ENCODE measurements at regions of chr18 and their contacts with region 1.

Region 1: GRCh38 chr18:44679056-44679905 is 1.4 kb upstream of the SETBP1 start:
- DNase-seq: peak; percentile 81
- ATAC-seq: peak; percentile 97
- H3K4me3 ChIP-seq: peak overlapping the region; percentile 75
- H3K27ac ChIP-seq: peak overlapping the region; percentile 87
- H3K4me1 ChIP-seq: peaks cover 3% of the 10 kb centered on the region; the same call in 1 of the 2 replicates
- H3K27me3 ChIP-seq: peaks cover 21% of the 10 kb centered on the region
- CTCF ChIP-seq: peak; percentile 72
- POLR2A ChIP-seq: peak; percentile 29; the same call in 1 of the 2 replicates
- RAD21 ChIP-seq: peak; percentile 64

Region 2: GRCh38 chr18:43661570-43661969 is 1017.7 kb before region 1 on chr18:
- CTCF ChIA-PET with region 1: no interaction called
- POLR2A ChIA-PET with region 1: no interaction called
- dilution Hi-C with region 1: no loop called
- in situ Hi-C with region 1: no loop called
- intact Hi-C with region 1: loop called (anchors 1 kb)
- DNase-seq: peak; percentile 83
- ATAC-seq: 0 out of 2 replicates have a peak, but pooled peaks have one; percentile 13
- H3K4me3 ChIP-seq: no peak overlapping the region
- H3K27ac ChIP-seq: peak overlapping the region; percentile 45; the same call in 1 of the 2 replicates
- H3K4me1 ChIP-seq: peaks cover 6% of the 10 kb centered on the region
- H3K27me3 ChIP-seq: no peaks in the 10 kb centered on the region
- CTCF ChIP-seq: peak; percentile 59
- POLR2A ChIP-seq: no peak
- RAD21 ChIP-seq: peak; percentile 75

Region 3: GRCh38 chr18:44458777-44459176 is 220.5 kb before region 1 on chr18:
- CTCF ChIA-PET with region 1: no interaction called
- POLR2A ChIA-PET with region 1: no interaction called
- dilution Hi-C with region 1: no loop called
- in situ Hi-C with region 1: no loop called
- intact Hi-C with region 1: no loop called
- DNase-seq: peak; percentile 32
- ATAC-seq: no peak
- H3K4me3 ChIP-seq: no peak overlapping the region
- H3K27ac ChIP-seq: no peak overlapping the region
- H3K4me1 ChIP-seq: no peaks in the 10 kb centered on the region
- H3K27me3 ChIP-seq: no peaks in the 10 kb centered on the region
- CTCF ChIP-seq: no peak
- POLR2A ChIP-seq: no peak
- RAD21 ChIP-seq: no peak

Region 4: DNA sequence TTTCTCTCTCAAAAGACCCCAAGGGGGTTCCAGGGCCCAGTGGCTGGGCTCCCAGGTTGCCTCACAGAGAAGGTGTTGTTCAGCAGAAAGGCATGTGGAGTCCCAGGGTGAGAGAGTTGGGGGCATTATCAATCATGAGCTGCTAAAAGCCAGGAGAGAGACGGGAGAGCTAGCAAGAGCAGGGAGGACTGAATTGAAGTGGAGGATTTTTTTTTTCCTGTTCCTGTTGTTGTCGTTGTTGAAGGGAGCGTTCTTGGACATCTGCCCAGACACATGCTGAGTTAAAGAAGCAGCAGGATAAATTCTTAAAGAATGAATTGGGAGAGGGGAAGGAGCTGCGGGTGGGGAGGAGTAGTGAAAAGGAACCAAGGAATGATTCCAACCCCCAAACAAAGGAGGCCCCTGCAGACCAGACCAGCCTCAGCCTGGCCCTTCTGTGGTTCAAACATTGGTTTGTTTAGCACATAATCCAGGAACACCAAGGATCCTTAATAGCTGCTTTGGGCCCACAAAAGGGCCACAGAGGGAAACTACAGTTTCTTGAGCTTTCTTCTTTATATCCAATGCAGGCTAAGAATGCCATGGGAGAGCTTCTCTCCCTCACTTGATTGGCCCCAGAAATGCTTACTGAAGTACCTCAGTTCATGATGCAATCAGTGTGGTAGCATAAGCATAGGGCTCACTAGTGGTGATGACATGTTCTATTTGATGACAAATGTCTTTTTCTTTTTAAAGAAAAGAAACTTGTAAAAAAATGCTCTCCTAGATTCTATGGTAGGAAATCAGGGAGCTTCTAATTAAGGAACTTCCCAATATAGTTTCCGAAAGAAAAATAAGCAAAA is 147.4 kb after region 1 on chr18:
- CTCF ChIA-PET with region 1: no interaction called
- POLR2A ChIA-PET with region 1: no interaction called
- dilution Hi-C with region 1: no loop called
- in situ Hi-C with region 1: no loop called
- intact Hi-C with region 1: no loop called
- DNase-seq: peak; percentile 83
- ATAC-seq: peak; percentile 77
- H3K4me3 ChIP-seq: no peak overlapping the region
- H3K27ac ChIP-seq: peak overlapping the region; percentile 68; the same call in 1 of the 2 replicates
- H3K4me1 ChIP-seq: peaks cover 2% of the 10 kb centered on the region; the same call in 1 of the 2 replicates
- H3K27me3 ChIP-seq: no peaks in the 10 kb centered on the region
- CTCF ChIP-seq: no peak
- POLR2A ChIP-seq: no peak
- RAD21 ChIP-seq: no peak

Region 5: GRCh38 chr18:44895176-44895798 is 216.0 kb after region 1 on chr18:
- CTCF ChIA-PET with region 1: no interaction called
- POLR2A ChIA-PET with region 1: no interaction called
- dilution Hi-C with region 1: no loop called
- in situ Hi-C with region 1: no loop called
- intact Hi-C with region 1: loop called (anchors 1 kb)
- DNase-seq: peak; percentile 45
- ATAC-seq: no peak
- H3K4me3 ChIP-seq: no peak overlapping the region
- H3K27ac ChIP-seq: no peak overlapping the region
- H3K4me1 ChIP-seq: no peaks in the 10 kb centered on the region
- H3K27me3 ChIP-seq: no peaks in the 10 kb centered on the region
- CTCF ChIP-seq: peak; percentile 50
- POLR2A ChIP-seq: no peak
- RAD21 ChIP-seq: peak; percentile 60

Region 6: DNA sequence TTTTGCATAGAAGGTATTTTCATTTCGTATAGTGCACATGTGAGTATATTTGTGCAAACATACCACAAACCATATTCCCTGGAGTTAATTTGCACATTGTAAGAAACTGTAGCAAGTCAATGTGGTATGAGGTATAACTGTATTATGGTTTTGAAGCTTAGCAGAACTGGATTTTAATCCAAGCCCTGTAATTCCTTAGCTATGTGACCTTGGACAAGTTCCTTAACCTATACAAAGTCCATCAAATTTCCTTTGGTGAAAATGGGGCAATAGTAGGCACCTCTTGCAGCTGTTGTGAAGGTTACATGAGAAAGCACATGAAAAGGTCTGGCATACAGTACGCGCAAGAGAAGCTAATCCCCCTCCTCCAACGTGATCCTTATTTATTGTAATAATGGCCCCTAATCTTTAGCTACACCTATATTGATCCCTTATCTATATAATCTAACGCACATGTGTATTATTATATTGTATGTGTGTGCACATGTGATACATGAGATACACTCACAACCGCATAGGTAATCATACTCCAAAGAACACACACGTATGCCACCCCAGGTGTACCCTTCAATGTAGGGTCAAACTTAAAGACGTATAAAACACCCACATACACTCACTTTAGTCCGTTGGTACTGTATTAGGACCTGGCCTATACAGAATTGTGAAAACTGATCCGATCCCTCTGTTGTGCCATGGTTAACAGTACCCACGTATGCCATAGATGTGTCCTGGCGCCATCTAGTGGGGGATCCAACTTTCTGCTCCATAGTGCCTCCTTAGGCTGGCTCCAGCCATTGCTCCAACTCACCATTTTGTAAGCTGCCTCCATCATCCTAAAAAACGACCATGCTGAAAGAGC is 533.1 kb after region 1 on chr18:
- CTCF ChIA-PET with region 1: no interaction called
- POLR2A ChIA-PET with region 1: no interaction called
- dilution Hi-C with region 1: no loop called
- in situ Hi-C with region 1: loop called (anchors 10 kb)
- intact Hi-C with region 1: loop called (anchors 2 kb)
- DNase-seq: peak; percentile 74
- ATAC-seq: peak; percentile 95
- H3K4me3 ChIP-seq: no peak overlapping the region
- H3K27ac ChIP-seq: no peak overlapping the region
- H3K4me1 ChIP-seq: no peaks in the 10 kb centered on the region
- H3K27me3 ChIP-seq: peaks cover 2% of the 10 kb centered on the region
- CTCF ChIP-seq: peak; percentile 100
- POLR2A ChIP-seq: 0 out of 2 replicates have a peak, but pooled peaks have one; percentile 37
- RAD21 ChIP-seq: peak; percentile 94

Region 7: GRCh38 chr18:45384137-45384961 is 705.1 kb after region 1 on chr18:
- CTCF ChIA-PET with region 1: interaction called, 4 read pairs
- POLR2A ChIA-PET with region 1: no interaction called
- dilution Hi-C with region 1: no loop called
- in situ Hi-C with region 1: no loop called
- intact Hi-C with region 1: loop called (anchors 2 kb)
- DNase-seq: peak; percentile 35
- ATAC-seq: peak; percentile 70
- H3K4me3 ChIP-seq: no peak overlapping the region
- H3K27ac ChIP-seq: no peak overlapping the region
- H3K4me1 ChIP-seq: no peaks in the 10 kb centered on the region; the same call in 1 of the 2 replicates
- H3K27me3 ChIP-seq: peaks cover 7% of the 10 kb centered on the region; the same call in 1 of the 2 replicates
- CTCF ChIP-seq: peak; percentile 56
- POLR2A ChIP-seq: no peak
- RAD21 ChIP-seq: peak; percentile 57

Region 8: DNA sequence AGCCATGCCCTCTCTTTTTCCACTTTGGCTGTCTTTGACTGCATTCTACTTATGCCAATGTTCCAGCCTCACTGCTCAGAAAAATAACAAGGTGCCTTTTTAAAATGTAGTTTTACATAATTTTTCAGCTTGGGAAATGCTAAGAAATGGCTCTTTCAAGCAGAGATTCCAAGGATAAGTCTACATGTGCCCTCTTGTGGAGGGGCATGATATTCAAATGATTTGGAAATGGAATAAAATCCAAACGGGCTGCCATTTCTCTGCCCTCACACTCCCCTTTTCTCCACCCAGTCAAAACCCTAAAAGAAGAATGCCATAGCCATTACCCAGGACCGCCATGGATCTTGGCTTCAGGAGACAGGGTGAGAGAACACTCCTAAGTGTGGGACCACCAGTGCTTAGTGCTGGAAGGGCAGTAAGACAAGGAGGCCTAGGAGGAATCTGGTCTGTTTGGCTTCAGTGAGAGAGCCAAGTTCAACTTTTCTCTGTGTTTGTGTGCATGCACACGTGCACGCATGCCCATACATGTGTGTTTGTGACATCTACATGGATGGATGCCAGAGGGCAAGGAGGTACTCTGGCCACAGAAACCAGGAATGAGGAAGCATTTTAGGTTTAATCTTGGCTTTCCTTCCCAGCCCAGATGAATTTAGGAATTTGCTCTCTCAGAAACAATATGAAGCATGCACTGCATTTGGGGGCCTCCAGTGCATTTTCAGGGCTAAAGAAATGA is 762.0 kb after region 1 on chr18:
- CTCF ChIA-PET with region 1: no interaction called
- POLR2A ChIA-PET with region 1: no interaction called
- dilution Hi-C with region 1: no loop called
- in situ Hi-C with region 1: no loop called
- intact Hi-C with region 1: loop called (anchors 5 kb)
- DNase-seq: peak; percentile 4
- ATAC-seq: peak; percentile 40; the same call in 1 of the 2 replicates
- H3K4me3 ChIP-seq: no peak overlapping the region
- H3K27ac ChIP-seq: no peak overlapping the region
- H3K4me1 ChIP-seq: no peaks in the 10 kb centered on the region
- H3K27me3 ChIP-seq: peaks cover 2% of the 10 kb centered on the region
- CTCF ChIP-seq: peak; percentile 36
- POLR2A ChIP-seq: no peak
- RAD21 ChIP-seq: peak; percentile 37

Measured in IMR-90 (cell line).